Endothelial cell of umbilical vein (primary cell): ENCODE measurements at regions of chr6 and their contacts with region 1.

Region 1: DNA sequence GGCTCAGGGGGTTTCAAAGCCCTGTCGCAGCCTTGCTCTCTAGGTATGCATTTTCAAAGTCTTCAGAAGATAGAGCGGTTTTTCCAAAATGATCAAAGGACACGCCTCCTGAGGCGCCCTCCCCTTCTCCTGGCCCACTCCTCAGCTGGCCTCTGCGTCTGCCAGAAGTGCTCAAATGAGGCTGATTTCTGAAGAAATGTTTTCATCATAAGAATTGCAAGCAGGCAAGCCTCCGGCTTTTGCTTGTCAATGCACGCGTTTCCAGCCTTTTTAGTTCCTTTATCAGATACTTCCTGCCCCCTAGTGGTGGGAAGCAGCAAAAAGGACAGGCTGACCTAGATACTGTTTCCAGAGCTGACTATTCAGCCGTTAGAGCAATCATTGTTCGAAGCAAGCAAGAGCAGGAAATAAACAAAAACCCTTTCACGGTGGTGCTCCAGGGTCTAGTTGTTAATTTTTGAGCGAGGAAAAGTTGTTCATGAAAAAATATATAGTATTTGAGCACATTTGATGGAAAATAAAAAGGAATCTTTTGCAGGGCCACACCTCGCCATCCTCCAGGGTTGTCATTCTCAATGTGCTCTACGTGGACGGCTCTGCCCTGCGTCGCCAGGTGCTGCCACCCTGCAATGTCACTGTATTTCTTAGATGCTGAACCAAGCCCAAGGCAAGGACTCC is 93.4 kb upstream of the ASF1A start:
- DNase-seq: peak; percentile 76
- H3K4me3 ChIP-seq: no peak overlapping the region
- H3K27ac ChIP-seq: no peak overlapping the region
- H3K4me1 ChIP-seq: no peaks in the 10 kb centered on the region
- H3K27me3 ChIP-seq: no peaks in the 10 kb centered on the region
- CTCF ChIP-seq: peak; percentile 83 to 86
- POLR2A ChIP-seq: no peak

Region 2: GRCh38 chr6:118787724-118788423 is 12.7 kb before region 1 on chr6:
- CTCF ChIA-PET with region 1: interaction called, 24 read pairs
- POLR2A ChIA-PET with region 1: no interaction called
- dilution Hi-C with region 1: no loop called
- intact Hi-C with region 1: no loop called
- DNase-seq: peak; percentile 44
- H3K4me3 ChIP-seq: no peak overlapping the region
- H3K27ac ChIP-seq: no peak overlapping the region
- H3K4me1 ChIP-seq: peaks cover 7% of the 10 kb centered on the region
- H3K27me3 ChIP-seq: no peaks in the 10 kb centered on the region
- CTCF ChIP-seq: no peak
- POLR2A ChIP-seq: no peak